Activated CD4-positive, alpha-beta memory T cell treated with anti-CD3 and anti-CD28 coated beads for 36 hours (primary cell): ENCODE measurements at regions of chr6 and their contacts with region 1.

Region 1: DNA sequence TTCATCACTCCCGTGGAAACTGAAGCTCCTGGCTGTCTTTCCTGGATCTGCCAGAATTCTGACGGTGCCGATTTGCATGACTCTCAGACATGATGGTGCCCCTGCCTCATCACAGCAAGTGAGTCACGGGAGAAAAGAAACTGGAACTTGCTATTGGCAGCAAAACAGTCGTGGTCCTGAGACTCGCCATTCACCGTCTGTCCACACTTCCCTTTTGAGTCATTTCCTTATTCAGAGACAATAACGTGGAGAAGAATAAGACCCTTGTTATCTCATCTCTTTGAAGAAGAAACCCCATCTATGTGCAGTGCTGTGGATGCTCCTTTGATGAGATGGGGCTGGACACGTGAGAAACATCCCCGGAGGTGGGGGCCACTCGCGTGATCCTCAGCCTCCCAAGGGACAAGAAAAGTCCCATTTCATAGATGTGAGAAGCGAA is 4.2 kb downstream of the GPR31 start:
- DNase-seq: peak; percentile 43
- H3K4me3 Mint-ChIP-seq: peak overlapping the region; percentile 8
- H3K27ac Mint-ChIP-seq: no peak overlapping the region
- H3K4me1 Mint-ChIP-seq: peaks cover 24% of the 10 kb centered on the region
- H3K27me3 Mint-ChIP-seq: peaks cover 2% of the 10 kb centered on the region

Region 2: GRCh38 chr6:167119670-167120381 is 33.7 kb before region 1 on chr6:
- CTCF ChIA-PET with region 1: interaction called, 3 read pairs
- POLR2A ChIA-PET with region 1: no interaction called
- intact Hi-C with region 1: loop called (anchors 2 kb)
- DNase-seq: peak; percentile 55
- H3K4me3 Mint-ChIP-seq: no peak overlapping the region
- H3K27ac Mint-ChIP-seq: peak overlapping the region; percentile 72
- H3K4me1 Mint-ChIP-seq: peaks cover 87% of the 10 kb centered on the region
- H3K27me3 Mint-ChIP-seq: no peaks in the 10 kb centered on the region

Region 3: GRCh38 chr6:167699141-167699931 is 545.8 kb after region 1 on chr6:
- CTCF ChIA-PET with region 1: no interaction called
- POLR2A ChIA-PET with region 1: no interaction called
- intact Hi-C with region 1: no loop called
- DNase-seq: peak; percentile 78
- H3K4me3 Mint-ChIP-seq: peak overlapping the region; percentile 45
- H3K27ac Mint-ChIP-seq: peak overlapping the region; percentile 77
- H3K4me1 Mint-ChIP-seq: peaks cover 18% of the 10 kb centered on the region
- H3K27me3 Mint-ChIP-seq: peaks cover 11% of the 10 kb centered on the region